Activated naive CD8-positive, alpha-beta T cell treated with anti-CD3 and anti-CD28 coated beads, Interleukin-2, amount 10 ng/mL, durations not matched to agents 7 days and 5 days (primary cell): ENCODE measurements at regions of chr12 and their contacts with region 1.

Region 1: DNA sequence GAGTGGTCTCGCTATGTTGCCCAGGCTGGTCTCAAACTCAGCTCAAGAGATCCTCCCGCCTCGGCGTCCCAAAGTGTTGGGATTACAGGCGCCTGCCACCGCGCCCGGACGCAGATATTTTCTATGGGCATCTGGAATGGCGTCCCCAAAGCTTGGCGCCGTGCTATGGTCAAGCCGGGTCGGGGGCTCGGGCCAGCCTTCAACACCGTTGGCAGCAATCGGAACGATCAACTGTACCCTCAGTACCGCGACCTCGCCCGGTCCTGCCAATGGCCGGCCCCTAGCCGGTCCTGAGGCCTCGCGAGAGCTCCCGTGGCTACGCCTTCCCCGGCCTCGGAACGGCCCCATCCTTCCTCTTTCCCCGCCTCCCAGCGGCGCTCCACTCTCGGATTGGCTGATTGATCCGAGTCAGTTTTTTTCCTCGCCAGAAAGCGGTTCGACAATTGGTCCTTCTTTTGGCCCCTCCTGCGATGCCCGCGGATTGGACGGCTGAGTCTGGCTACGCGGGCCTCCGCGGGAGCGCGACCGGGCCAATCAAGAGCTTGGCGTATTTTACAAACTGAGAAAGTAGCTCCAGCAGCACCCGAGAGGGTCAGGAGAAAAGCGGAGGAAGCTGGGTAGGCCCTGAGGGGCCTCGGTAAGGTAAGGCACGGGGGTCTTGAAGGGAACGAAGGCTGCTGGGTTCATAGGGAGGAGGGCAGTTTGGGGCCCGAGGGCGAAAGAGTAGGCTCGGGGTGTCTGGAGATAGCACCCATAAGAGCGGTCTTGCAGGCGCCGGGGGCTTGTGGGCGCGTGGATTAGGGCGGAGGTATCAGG is at the start of gene TROAP:
- DNase-seq: peak; percentile 95
- ATAC-seq: peak; percentile 98
- H3K4me3 Mint-ChIP-seq: peak within 1 kb of the TSS; percentile 100
- H3K27ac Mint-ChIP-seq: peak within 1 kb of the TSS; percentile 98
- H3K4me1 Mint-ChIP-seq: peaks cover 24% of the 10 kb centered on the region
- H3K27me3 Mint-ChIP-seq: peaks cover 5% of the 10 kb centered on the region
- total RNA-seq, gene TROAP: 73.8 to 80.4 TPM

Region 2: DNA sequence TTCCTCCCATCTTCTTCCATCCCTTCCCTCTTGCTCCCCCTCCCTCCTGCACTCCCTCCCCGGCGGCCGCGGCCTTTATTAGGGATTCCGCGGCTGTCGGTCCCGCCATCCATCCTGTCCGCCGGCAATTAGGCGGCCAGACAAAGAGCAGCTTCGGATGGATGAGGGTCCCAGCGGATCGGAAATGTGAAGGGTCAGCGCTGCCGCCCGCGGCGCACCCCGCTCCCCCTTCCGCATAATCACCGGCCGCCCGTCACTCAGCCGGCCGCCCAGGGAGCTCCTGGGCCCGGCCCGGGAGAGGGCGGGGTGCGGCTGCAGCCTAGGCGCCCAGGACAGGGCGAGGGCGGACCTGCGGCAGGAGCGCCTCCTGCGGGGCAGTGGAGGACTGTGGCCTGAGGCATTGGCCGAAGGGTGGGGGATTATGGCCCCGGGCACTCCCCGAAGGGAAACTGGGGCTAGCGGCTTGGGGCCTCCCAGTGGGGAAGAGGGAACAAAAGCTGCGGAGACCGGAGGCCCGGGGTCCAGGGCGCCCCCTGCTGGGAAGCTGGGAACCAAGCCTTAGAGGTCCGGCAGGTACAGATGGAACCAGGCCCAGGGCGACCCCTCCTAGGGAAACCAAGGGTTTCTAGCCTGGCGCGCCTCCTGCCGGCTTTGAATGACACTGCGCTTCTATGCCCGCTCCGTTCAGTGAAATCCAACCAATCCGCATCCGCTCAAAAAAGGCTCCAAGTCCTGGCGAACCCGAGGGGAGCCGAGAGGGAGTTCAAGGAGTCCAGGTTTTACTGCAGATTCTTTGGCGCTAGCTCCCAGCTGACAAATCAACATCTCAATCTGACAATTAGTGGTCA is 19.4 kb after region 1 on chr12:
- POLR2A ChIA-PET with region 1: interaction called, 16 read pairs
- DNase-seq: peak; percentile 84
- ATAC-seq: peak; percentile 73
- H3K4me3 Mint-ChIP-seq: peak overlapping the region; percentile 70
- H3K27ac Mint-ChIP-seq: no peak overlapping the region
- H3K4me1 Mint-ChIP-seq: peaks cover 26% of the 10 kb centered on the region
- H3K27me3 Mint-ChIP-seq: peaks cover 91% of the 10 kb centered on the region

Region 3: GRCh38 chr12:49730568-49731101 is 407.7 kb after region 1 on chr12:
- POLR2A ChIA-PET with region 1: no interaction called
- DNase-seq: no peak
- ATAC-seq: no peak
- H3K4me3 Mint-ChIP-seq: no peak overlapping the region
- H3K27ac Mint-ChIP-seq: no peak overlapping the region
- H3K4me1 Mint-ChIP-seq: peaks cover 3% of the 10 kb centered on the region
- H3K27me3 Mint-ChIP-seq: peaks cover 11% of the 10 kb centered on the region